ENCODE measurements at regions of chr2 and their contacts with region 1.

Region 1: DNA sequence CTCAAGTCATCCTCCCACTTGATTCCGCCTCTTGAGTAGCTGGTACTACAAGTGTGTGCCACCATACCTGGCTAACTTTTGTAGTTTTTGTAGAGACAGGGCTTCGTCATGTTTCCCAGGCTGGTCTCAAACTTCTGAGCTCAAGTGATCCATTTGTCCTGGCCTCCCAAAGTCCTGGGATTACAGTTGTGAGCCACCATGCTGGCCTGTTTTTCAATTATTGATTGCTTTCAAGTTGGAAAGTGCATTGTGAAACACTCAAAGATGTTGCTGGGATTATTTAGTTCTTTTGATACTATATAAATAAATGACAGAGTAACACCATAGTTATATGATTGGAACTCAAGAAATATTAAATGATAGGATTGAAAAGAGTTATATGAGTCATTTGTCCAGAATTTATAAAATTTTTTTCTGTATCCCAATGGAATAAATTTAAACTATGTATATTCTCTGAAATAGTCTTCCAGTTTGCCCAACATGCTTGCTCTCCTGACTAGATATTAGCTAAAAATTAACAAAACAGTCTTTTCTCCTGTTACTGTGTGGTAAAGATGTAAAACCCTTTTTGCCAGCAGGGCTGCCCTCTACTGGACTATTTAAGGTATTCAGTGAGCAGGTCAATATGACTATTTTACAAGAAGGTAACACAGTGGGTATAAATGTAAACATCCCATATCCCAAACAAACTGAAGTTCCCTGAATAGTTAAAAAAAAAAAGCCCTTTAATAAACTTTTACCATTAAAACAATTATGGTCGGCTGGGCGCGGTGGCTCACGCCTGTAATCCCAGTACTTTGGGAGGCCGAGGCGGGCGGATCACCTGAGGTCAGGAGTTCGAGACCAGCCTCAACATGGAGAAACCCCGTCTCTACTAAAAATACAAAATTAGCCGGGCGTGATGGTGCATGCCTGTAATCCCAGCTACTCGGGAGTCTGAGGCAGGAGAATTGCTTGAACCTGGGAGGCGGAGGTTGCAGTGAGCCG is 42.7 kb downstream of the ACSL3 start:
- DNase-seq: no peak
- ATAC-seq: 0 out of 2 replicates have a peak, but pooled peaks have one; percentile 21
- H3K4me3 Mint-ChIP-seq: no peak overlapping the region
- H3K27ac Mint-ChIP-seq: peak overlapping the region; percentile 75; the same call in 1 of the 2 replicates
- H3K4me1 Mint-ChIP-seq: peaks cover 84% of the 10 kb centered on the region
- H3K27me3 Mint-ChIP-seq: no peaks in the 10 kb centered on the region
- CTCF ChIP-seq: peak; percentile 33

Region 2: DNA sequence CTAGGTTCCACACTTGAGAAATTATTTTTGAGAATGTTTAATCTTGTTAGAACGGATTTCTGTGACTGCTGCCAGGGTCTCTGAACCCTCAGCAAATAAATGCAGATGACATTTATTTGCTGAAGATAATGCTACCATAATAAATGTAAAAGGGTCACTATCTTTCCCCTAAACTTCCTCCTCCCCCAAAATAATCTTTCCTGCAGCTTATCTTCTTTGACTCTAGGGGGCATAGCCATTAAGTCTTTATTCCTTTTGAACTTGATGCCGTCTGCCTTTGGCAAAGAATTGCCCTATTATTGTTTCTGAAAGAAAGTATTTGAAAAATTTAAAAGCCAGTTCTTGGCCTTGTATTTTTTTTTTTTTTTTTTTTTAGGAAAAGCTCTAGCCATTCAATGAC is 106.3 kb before region 1 on chr2:
- CTCF ChIA-PET with region 1: interaction called, 10 read pairs
- POLR2A ChIA-PET with region 1: interaction called, 3 read pairs
- DNase-seq: no peak
- ATAC-seq: peak; percentile 37; the same call in 1 of the 2 replicates
- H3K4me3 Mint-ChIP-seq: no peak overlapping the region
- H3K27ac Mint-ChIP-seq: no peak overlapping the region
- H3K4me1 Mint-ChIP-seq: peaks cover 28% of the 10 kb centered on the region
- H3K27me3 Mint-ChIP-seq: no peaks in the 10 kb centered on the region
- CTCF ChIP-seq: no peak

Region 3: DNA sequence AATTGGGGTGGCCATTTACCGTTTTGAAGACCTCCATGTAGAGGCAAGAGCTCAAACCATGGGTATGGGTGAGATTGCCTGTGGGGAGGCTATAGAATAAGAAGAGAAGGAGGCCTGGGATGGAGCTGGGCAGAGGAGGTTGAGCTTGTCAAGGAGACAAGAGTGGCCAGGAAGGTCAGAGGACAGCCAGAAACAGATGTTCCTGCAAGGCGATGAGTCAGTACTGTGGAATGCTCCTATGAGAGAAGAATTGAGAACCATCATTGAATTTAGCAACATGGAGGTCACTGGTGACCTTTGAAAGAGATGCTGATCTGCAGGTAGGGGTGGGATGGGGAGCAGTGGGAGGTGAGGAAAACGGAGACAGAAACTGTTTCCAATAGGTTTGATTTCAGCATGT is 39.2 kb before region 1 on chr2:
- CTCF ChIA-PET with region 1: interaction called, 10 read pairs
- POLR2A ChIA-PET with region 1: interaction called, 3 read pairs
- DNase-seq: peak; percentile 12
- ATAC-seq: peak; percentile 13
- H3K4me3 Mint-ChIP-seq: no peak overlapping the region
- H3K27ac Mint-ChIP-seq: no peak overlapping the region
- H3K4me1 Mint-ChIP-seq: peaks cover 22% of the 10 kb centered on the region
- H3K27me3 Mint-ChIP-seq: no peaks in the 10 kb centered on the region
- CTCF ChIP-seq: no peak

Region 4: GRCh38 chr2:223051693-223052289 is 148.3 kb after region 1 on chr2 and contains the start of gene KCNE4:
- CTCF ChIA-PET with region 1: no interaction called
- POLR2A ChIA-PET with region 1: no interaction called
- DNase-seq: no peak
- ATAC-seq: peak; percentile 41
- H3K4me3 Mint-ChIP-seq: peak within 1 kb of the TSS; percentile 13; the same call in 1 of the 2 replicates
- H3K27ac Mint-ChIP-seq: peak within 1 kb of the TSS; percentile 72; the same call in 1 of the 2 replicates
- H3K4me1 Mint-ChIP-seq: peaks cover 40% of the 10 kb centered on the region
- H3K27me3 Mint-ChIP-seq: peaks cover 9% of the 10 kb centered on the region
- CTCF ChIP-seq: no peak
- total RNA-seq, gene KCNE4: 0.04 TPM in 1 of 3 replicates, not detected in the others